Posterior cingulate gyrus (tissue), 11 donors: ENCODE measurements at regions of chr7 and their contacts with region 1.

Region 1: DNA sequence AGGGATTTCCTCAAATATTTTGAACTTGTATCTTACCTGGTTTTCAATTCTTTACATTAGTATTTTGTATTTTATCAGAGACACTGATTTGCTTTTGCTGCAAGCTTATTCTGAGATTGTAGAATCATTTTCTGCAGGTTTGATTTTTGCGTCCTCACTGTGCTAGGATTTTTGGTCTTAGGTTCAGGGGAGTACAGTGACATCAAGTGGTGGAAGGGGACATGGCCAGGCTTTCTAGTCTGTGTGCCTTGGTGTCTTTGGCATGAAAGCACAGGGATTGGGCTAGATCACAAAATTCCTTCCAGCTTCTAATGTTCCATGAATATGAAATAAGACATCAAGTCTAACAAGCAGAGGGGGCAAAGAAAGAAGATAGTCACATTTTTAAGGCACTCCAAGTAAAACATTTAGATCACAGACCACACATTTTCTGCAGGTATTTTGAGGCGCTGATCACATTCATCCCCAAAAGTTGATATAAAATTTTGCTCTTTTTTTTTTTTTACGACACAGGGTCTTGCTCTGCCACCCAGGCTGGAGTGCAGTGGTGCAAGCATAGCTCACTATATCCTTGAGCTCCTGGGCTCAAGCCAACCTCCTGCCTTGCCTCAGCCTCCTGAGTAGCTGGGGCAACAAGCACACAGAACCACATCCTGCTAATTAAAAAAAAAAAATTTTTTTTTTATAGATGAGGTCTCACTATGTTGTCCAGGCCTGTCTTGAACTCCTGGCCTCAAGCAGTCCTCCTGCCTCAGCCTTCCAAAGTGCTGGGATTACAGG is 124.4 kb downstream of the PON1 start:
- DNase-seq: peak in 8 of 10 donors; percentile 31 to 91 (median 55)

Region 2: DNA sequence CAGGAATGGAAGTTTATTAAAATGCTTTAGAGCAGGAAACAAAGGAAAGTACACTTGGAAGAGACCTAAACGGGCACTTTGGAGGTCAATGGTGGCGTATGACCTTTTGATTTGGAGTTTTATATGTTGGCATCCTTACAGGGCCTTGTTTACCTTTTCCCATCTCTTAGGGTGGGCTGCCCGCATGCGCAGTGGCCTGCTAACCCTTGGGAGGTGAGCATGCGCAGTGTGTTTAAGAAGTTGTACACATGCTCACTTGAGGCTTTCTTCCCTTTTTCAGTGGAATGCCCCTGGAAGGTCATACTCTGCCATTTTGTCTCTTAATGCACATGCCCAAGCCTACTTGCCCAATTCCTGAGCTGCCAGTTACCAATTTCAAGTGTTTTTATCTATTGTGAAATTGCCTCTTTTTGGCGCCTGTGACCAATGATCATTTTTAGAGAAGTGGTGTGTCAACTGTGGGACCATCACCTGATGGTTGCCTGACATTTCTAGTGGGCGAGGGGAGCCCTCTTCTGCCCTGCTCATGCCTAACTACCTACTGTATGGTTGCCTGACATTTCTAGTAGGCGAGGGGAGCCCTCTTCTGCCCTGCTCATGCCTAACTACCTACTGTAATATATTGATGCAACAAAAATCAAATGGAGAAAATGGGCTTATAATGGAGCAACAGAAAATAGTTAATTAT is 154.6 kb before region 1 on chr7:
- intact Hi-C with region 1: loop called (anchors 5 kb)
- DNase-seq: peak in 6 of 10 donors; percentile 17 to 92 (median 56)

Region 3: GRCh38 chr7:95279417-95279816 is 79.4 kb after region 1 on chr7:
- intact Hi-C with region 1: no loop called
- DNase-seq: no peak